Activated CD4-positive, alpha-beta memory T cell treated with anti-CD3 and anti-CD28 coated beads, Interleukin-2, amount 10 ng/mL, durations not matched to agents 7 days and 5 days (primary cell): ENCODE measurements at regions of chr2 and their contacts with region 1.

Region 1: GRCh38 chr2:28621172-28622100 is 125.6 kb downstream of the PLB1 start:
- DNase-seq: peak; percentile 79
- H3K4me3 Mint-ChIP-seq: peak overlapping the region; percentile 53
- H3K27ac Mint-ChIP-seq: peak overlapping the region; percentile 96
- H3K4me1 Mint-ChIP-seq: peaks cover 86% of the 10 kb centered on the region
- H3K27me3 Mint-ChIP-seq: no peaks in the 10 kb centered on the region

Region 2: GRCh38 chr2:28610583-28611201 is 10.7 kb before region 1 on chr2:
- CTCF ChIA-PET with region 1: interaction called, 7 read pairs
- POLR2A ChIA-PET with region 1: interaction called, 54 read pairs
- DNase-seq: peak; percentile 68
- H3K4me3 Mint-ChIP-seq: peak overlapping the region; percentile 28
- H3K27ac Mint-ChIP-seq: peak overlapping the region; percentile 50
- H3K4me1 Mint-ChIP-seq: peaks cover 32% of the 10 kb centered on the region
- H3K27me3 Mint-ChIP-seq: no peaks in the 10 kb centered on the region

Region 3: DNA sequence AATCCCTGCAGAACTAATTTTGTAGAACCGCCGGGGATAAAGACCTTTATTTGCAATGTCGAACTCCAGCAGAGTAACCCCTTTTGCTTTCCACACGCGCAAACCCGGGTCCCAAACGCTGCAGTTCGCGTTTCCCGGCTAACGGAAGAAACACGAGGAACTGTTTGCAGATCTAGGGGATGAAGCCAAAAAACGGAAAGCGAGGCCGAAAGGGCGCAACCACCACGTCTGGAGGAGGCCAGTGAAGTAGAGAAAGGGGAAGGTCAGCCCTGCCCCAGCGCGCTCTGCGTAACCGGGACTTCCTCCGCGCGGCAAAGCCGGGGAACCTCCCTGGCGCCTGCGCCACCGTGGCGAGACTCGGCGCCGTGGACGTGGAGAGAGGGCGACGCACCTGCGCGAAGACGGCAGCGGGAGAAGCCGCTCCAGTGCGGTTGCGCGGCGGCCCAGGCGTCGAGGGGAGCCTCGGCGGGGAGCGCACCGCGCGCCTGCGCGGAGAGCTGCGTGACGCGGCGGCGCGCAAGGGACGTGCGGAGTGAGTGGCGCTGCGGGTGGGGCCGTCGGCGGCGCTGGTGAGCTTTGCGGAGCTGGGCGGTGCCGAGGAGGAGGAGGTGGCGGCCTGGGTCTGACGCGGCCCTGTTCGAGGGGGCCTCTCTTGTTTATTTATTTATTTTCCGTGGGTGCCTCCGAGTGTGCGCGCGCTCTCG is 130.0 kb after region 1 on chr2 and contains the start of gene PPP1CB:
- CTCF ChIA-PET with region 1: interaction called, 4 read pairs
- POLR2A ChIA-PET with region 1: interaction called, 48 read pairs
- DNase-seq: peak; percentile 96
- H3K4me3 Mint-ChIP-seq: peak within 1 kb of the TSS; percentile 91
- H3K27ac Mint-ChIP-seq: peak within 1 kb of the TSS; percentile 94
- H3K4me1 Mint-ChIP-seq: peaks cover 57% of the 10 kb centered on the region
- H3K27me3 Mint-ChIP-seq: no peaks in the 10 kb centered on the region
- total RNA-seq, gene PPP1CB: 211 to 213 TPM